CD8-positive, alpha-beta memory T cell (primary cell): ENCODE measurements at regions of chr18 and their contacts with region 1.

Region 1: DNA sequence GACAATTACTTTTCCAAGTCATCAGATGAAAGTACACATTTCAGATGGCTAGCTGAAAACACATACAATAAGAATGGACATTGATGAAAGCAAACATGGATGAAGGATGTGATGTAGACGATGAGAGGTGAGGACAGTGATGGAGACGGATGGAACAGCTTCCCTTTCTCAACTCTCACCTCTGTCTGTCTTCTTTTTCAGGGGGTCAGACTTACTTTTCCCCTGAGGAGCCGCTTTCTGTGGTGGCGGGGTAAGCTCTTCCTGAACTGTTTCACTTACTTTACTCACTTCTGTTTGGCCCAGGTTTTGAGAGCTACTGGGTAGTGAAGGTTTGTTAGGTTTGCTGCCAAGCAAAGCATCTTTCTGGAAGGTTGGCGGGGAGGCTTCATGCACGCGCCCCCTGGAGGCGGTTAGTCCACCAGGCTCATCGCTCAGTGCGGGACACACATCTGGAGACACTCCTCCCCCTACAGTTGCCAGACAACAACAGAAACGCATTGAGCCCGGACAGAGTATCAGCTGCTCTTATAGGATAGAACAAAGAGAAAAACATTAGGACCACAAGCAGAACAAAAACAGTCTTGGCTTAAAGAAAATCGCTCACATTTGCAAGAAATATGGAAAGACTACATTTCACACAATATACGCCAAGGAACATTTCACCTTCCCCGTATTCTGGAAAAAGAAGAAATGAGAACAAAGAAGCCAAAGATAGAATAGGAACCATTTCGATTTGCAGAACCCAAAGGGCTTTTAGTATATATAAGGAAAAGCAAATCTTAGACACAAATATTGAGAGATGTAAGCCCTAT is 90.5 kb downstream of the MYOM1 start:
- DNase-seq: peak; percentile 62 to 84 (median 67)
- H3K4me3 ChIP-seq: no peak overlapping the region
- H3K4me3 Mint-ChIP-seq: no peak overlapping the region
- H3K27ac ChIP-seq: no peak overlapping the region
- H3K27ac Mint-ChIP-seq: peak overlapping the region in 4 of 8 donors; percentile 10 to 58 (median 29)
- H3K4me1 ChIP-seq: peaks cover 8% of the 10 kb centered on the region
- H3K4me1 Mint-ChIP-seq: peaks cover 9% of the 10 kb centered on the region in 3 donors
- H3K27me3 ChIP-seq: no peaks in the 10 kb centered on the region
- H3K27me3 Mint-ChIP-seq: peaks cover 0 to 3% of the 10 kb centered on the region in 2 donors

Region 2: DNA sequence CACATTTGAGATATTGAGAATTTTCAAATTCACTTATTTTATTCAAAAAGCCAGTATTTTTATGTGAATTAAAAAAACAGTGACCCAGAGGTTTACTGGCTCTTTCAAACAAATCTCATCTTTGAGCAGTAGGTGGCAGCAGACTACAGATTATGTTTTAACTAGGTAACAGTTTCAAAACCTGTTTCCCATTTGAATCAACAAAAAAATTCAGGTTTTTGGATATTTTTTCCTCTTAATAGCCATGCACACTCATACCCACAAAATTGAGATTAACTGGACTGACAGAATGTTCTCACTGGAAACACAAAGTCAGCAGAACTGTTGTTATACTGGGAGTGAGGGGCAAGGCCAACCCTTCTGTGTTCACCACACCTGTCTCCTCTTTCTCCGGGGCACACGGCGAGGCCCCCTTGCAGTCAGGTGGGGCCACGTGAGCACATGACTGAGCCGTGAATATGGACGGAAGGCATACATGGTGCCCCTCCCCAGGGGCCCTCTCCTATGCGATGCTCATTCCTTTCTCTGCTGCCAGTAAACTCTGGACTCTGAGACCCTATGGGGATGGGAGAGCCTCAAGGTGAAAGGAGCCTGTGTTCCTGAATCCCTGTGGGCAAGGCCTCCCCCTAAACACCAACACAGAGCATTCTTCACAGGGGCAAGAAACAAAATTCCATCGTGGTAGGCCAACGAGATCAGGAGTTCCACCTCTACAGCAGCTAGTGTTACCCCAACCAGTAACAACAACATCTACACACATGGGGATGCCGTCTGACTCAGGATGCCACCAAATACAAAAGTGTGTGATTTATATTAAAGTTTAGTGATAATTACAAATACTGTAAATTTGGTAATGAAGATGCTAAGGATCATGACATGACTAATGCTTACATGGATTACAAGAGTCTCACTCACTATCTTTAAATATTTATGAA is 196.7 kb before region 1 on chr18:
- CTCF ChIA-PET with region 1: interaction called, 19 read pairs
- POLR2A ChIA-PET with region 1: no interaction called
- DNase-seq: peak in 4 of 5 donors; percentile 22 to 69 (median 60)
- H3K4me3 ChIP-seq: no peak overlapping the region
- H3K4me3 Mint-ChIP-seq: peak overlapping the region in 4 of 7 donors; percentile 8 to 42 (median 20)
- H3K27ac ChIP-seq: no peak overlapping the region
- H3K27ac Mint-ChIP-seq: peak overlapping the region; percentile 85 to 96 (median 91)
- H3K4me1 ChIP-seq: peaks cover 9% of the 10 kb centered on the region
- H3K4me1 Mint-ChIP-seq: peaks cover 29 to 47% (median 45%) of the 10 kb centered on the region in 3 donors
- H3K27me3 ChIP-seq: no peaks in the 10 kb centered on the region
- H3K27me3 Mint-ChIP-seq: no peaks in the 10 kb centered on the region

Region 3: GRCh38 chr18:3074087-3074486 is 55.2 kb before region 1 on chr18:
- CTCF ChIA-PET with region 1: interaction called, 10 read pairs
- POLR2A ChIA-PET with region 1: no interaction called
- DNase-seq: no peak
- H3K4me3 ChIP-seq: no peak overlapping the region
- H3K4me3 Mint-ChIP-seq: no peak overlapping the region
- H3K27ac ChIP-seq: no peak overlapping the region
- H3K27ac Mint-ChIP-seq: peak overlapping the region in 1 of 8 donors; percentile 22
- H3K4me1 ChIP-seq: peaks cover 12% of the 10 kb centered on the region
- H3K4me1 Mint-ChIP-seq: peaks cover 21 to 42% (median 30%) of the 10 kb centered on the region in 3 donors
- H3K27me3 ChIP-seq: no peaks in the 10 kb centered on the region
- H3K27me3 Mint-ChIP-seq: no peaks in the 10 kb centered on the region

Region 4: GRCh38 chr18:3151399-3152264 is 22.4 kb after region 1 on chr18:
- CTCF ChIA-PET with region 1: interaction called, 19 read pairs
- POLR2A ChIA-PET with region 1: no interaction called
- DNase-seq: peak in 2 of 5 donors; percentile 19 to 37
- H3K4me3 ChIP-seq: no peak overlapping the region
- H3K4me3 Mint-ChIP-seq: no peak overlapping the region
- H3K27ac ChIP-seq: no peak overlapping the region
- H3K27ac Mint-ChIP-seq: no peak overlapping the region
- H3K4me1 ChIP-seq: no peaks in the 10 kb centered on the region
- H3K4me1 Mint-ChIP-seq: peaks cover 6 to 13% (median 9%) of the 10 kb centered on the region in 3 donors
- H3K27me3 ChIP-seq: no peaks in the 10 kb centered on the region
- H3K27me3 Mint-ChIP-seq: no peaks in the 10 kb centered on the region